ENCODE measurements at regions of chr7 and their contacts with region 1.

Region 1: GRCh38 chr7:24290004-24290641 is 6.1 kb downstream of the NPY start:
- DNase-seq: peak; percentile 76
- H3K4me3 Mint-ChIP-seq: no peak overlapping the region
- H3K27ac Mint-ChIP-seq: no peak overlapping the region
- H3K4me1 Mint-ChIP-seq: peaks cover 14% of the 10 kb centered on the region
- H3K27me3 Mint-ChIP-seq: peaks cover 39% of the 10 kb centered on the region

Region 2: GRCh38 chr7:23570592-23571200 is 719.4 kb before region 1 on chr7:
- CTCF ChIA-PET with region 1: interaction called, 3 read pairs
- POLR2A ChIA-PET with region 1: no interaction called
- intact Hi-C with region 1: loop called (anchors 10 kb)
- DNase-seq: peak; percentile 82
- H3K4me3 Mint-ChIP-seq: no peak overlapping the region
- H3K27ac Mint-ChIP-seq: no peak overlapping the region
- H3K4me1 Mint-ChIP-seq: no peaks in the 10 kb centered on the region
- H3K27me3 Mint-ChIP-seq: peaks cover 8% of the 10 kb centered on the region

Region 3: DNA sequence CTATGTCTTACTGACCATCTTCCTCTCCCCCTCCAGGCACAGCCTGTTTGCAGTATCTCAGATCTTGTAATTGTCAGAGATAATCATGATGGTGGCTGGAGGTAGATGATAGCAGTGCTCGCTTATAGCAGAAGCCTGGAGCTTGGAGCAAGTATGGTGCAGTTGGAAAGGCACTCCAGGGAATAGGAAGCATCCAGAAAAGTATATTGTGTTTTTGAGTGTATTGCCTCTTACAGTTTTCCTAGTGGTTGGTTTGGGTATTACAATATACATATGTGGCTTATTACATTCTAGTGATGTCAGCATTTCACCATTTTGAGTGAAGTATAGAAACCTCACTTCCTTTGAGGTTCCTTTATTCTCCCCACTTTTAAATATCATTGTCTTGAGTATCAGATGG is 478.6 kb before region 1 on chr7:
- CTCF ChIA-PET with region 1: no interaction called
- POLR2A ChIA-PET with region 1: no interaction called
- intact Hi-C with region 1: no loop called
- DNase-seq: no peak
- H3K4me3 Mint-ChIP-seq: no peak overlapping the region
- H3K27ac Mint-ChIP-seq: no peak overlapping the region
- H3K4me1 Mint-ChIP-seq: no peaks in the 10 kb centered on the region
- H3K27me3 Mint-ChIP-seq: no peaks in the 10 kb centered on the region

Region 4: GRCh38 chr7:23863209-23863798 is 426.8 kb before region 1 on chr7:
- CTCF ChIA-PET with region 1: no interaction called
- POLR2A ChIA-PET with region 1: no interaction called
- intact Hi-C with region 1: loop called (anchors 10 kb)
- DNase-seq: peak; percentile 22
- H3K4me3 Mint-ChIP-seq: no peak overlapping the region
- H3K27ac Mint-ChIP-seq: no peak overlapping the region
- H3K4me1 Mint-ChIP-seq: no peaks in the 10 kb centered on the region
- H3K27me3 Mint-ChIP-seq: peaks cover 8% of the 10 kb centered on the region

Region 5: DNA sequence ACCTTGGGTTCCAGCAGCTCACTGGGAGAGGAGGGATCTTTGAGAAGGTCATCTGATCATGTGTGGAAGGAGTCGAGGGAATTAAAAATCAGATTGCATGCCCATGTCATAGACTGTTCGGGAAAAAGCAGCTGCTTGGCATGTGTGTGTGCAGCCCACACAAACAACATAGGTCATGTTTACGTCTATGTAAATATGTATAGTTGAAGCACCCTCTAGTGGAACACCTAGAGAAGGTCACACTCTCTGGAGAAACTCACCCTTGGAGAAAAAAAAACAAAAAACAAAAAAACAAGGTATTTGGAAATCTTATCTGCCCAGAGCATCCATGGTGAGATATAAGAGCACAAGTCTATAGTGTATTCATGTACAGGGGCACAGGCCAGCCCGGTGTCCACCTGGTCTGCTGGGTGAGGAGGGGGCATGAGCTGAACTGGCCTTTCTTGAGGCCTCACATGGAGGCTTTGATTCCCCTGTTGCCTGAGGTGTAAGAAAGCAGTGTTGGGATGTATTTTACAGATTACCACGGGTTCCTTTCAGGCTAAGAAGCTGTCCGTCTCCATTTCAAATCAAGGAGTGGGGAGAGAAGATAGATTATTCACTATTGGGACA is 91.9 kb after region 1 on chr7:
- CTCF ChIA-PET with region 1: interaction called, 22 read pairs
- POLR2A ChIA-PET with region 1: no interaction called
- intact Hi-C with region 1: loop called (anchors 1 kb)
- DNase-seq: no peak
- H3K4me3 Mint-ChIP-seq: no peak overlapping the region
- H3K27ac Mint-ChIP-seq: no peak overlapping the region
- H3K4me1 Mint-ChIP-seq: no peaks in the 10 kb centered on the region
- H3K27me3 Mint-ChIP-seq: peaks cover 9% of the 10 kb centered on the region

Region 6: DNA sequence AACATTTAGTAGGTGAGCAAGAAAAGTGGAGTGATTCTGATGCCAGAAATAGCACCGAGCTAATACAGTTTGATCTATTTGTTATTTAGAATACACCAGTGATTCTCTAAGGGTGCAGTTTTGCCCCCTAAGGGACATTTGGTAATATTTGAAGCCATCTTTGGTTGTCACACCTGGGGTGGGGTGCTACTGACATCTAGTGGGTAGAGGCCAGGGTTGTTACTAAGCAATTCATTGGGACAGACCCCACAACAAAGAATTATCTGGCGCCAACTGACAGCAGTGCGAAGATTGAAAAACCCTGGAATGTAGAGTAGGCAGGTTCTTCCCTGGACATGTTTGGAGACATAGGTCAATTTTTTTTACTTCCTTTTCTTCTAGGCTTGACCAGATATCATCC is 297.7 kb after region 1 on chr7:
- CTCF ChIA-PET with region 1: interaction called, 3 read pairs
- POLR2A ChIA-PET with region 1: no interaction called
- intact Hi-C with region 1: loop called (anchors 2 kb)
- DNase-seq: peak; percentile 48
- H3K4me3 Mint-ChIP-seq: no peak overlapping the region
- H3K27ac Mint-ChIP-seq: no peak overlapping the region
- H3K4me1 Mint-ChIP-seq: peaks cover 11% of the 10 kb centered on the region
- H3K27me3 Mint-ChIP-seq: no peaks in the 10 kb centered on the region

Region 7: GRCh38 chr7:24665564-24666294 is 375.6 kb after region 1 on chr7:
- CTCF ChIA-PET with region 1: interaction called, 10 read pairs
- POLR2A ChIA-PET with region 1: no interaction called
- intact Hi-C with region 1: loop called (anchors 1 kb)
- DNase-seq: peak; percentile 32
- H3K4me3 Mint-ChIP-seq: no peak overlapping the region
- H3K27ac Mint-ChIP-seq: no peak overlapping the region
- H3K4me1 Mint-ChIP-seq: no peaks in the 10 kb centered on the region
- H3K27me3 Mint-ChIP-seq: no peaks in the 10 kb centered on the region

Region 8: GRCh38 chr7:25282194-25282593 is 992.1 kb after region 1 on chr7:
- CTCF ChIA-PET with region 1: no interaction called
- POLR2A ChIA-PET with region 1: no interaction called
- intact Hi-C with region 1: no loop called
- DNase-seq: no peak
- H3K4me3 Mint-ChIP-seq: no peak overlapping the region
- H3K27ac Mint-ChIP-seq: no peak overlapping the region
- H3K4me1 Mint-ChIP-seq: no peaks in the 10 kb centered on the region
- H3K27me3 Mint-ChIP-seq: peaks cover 6% of the 10 kb centered on the region